Naive thymus-derived CD4-positive, alpha-beta T cell (primary cell): ENCODE measurements at regions of chr16 and their contacts with region 1.

Region 1: DNA sequence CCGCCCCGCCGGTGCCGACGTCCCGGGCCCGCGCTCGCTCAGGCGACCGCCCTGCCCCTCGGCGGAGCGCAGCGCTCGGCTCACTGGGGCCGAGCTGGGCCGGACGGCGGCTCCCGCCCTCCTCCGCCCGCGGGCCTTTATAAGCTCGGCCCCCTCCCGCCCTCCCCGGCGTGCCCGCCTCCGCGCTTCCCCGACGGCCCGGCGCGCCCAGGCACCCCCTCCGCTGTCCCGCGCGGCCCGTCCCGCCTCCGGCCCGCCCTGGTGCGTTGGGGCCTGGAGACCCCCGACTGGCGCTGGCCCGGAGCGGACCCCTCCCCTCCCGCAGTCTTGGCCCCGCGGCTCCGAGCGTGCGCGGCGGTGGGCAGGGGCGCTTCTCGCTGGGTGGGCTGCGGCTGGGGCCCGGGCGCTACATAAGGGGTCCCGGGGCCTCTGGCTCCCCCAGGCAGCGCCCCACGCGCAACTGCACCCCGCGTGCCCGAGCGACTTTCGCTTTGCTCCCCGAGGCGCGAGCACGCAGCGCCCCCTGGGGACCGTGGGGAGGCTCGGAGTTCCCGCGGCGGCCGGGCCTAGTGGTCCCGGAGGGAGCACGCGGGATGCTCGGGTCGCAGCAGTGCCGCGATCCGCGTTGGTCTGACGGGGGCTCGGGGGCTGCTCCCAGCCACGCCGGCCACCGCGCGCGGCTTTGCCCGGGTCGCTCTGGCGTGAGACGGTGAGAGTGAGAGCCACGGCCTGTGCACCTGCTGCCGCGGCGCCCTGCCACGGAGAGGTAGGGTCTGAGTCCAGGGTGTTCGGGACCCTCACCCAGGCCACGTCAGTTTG is at the start of gene PIEZO1:
- DNase-seq: peak; percentile 76 to 93 (median 85)
- ATAC-seq: peak; percentile 77
- H3K4me3 ChIP-seq: peak within 1 kb of the TSS; percentile 54
- H3K4me3 Mint-ChIP-seq: peak within 1 kb of the TSS; percentile 66 to 87 (median 76)
- H3K27ac ChIP-seq: peak within 1 kb of the TSS; percentile 72
- H3K27ac Mint-ChIP-seq: peak within 1 kb of the TSS in 6 of 9 donors; percentile 45 to 92 (median 61)
- H3K4me1 ChIP-seq: peaks cover 48 to 49% of the 10 kb centered on the region in 2 donors
- H3K4me1 Mint-ChIP-seq: peaks cover 35 to 45% (median 45%) of the 10 kb centered on the region in 7 donors
- H3K27me3 ChIP-seq: no peaks in the 10 kb centered on the region
- H3K27me3 Mint-ChIP-seq: no peaks in the 10 kb centered on the region
- total RNA-seq, gene PIEZO1: 84.5 to 237 (median 124) TPM

Region 2: GRCh38 chr16:88442727-88443576 is 342.4 kb before region 1 on chr16:
- CTCF ChIA-PET with region 1: no interaction called
- POLR2A ChIA-PET with region 1: no interaction called
- intact Hi-C with region 1: loop called in 1 of 2 experiments (anchors 1 kb)
- DNase-seq: peak; percentile 61 to 91 (median 80)
- ATAC-seq: peak; percentile 88
- H3K4me3 ChIP-seq: no peak overlapping the region
- H3K4me3 Mint-ChIP-seq: peak overlapping the region in 2 of 10 donors; percentile 43 to 68
- H3K27ac ChIP-seq: no peak overlapping the region
- H3K27ac Mint-ChIP-seq: peak overlapping the region in 1 of 9 donors; percentile 43
- H3K4me1 ChIP-seq: peaks cover 4% of the 10 kb centered on the region in 2 donors
- H3K4me1 Mint-ChIP-seq: peaks cover 0 to 3% (median 0%) of the 10 kb centered on the region in 7 donors
- H3K27me3 ChIP-seq: no peaks in the 10 kb centered on the region
- H3K27me3 Mint-ChIP-seq: peaks cover 0 to 6% (median 0%) of the 10 kb centered on the region in 5 donors

Region 3: DNA sequence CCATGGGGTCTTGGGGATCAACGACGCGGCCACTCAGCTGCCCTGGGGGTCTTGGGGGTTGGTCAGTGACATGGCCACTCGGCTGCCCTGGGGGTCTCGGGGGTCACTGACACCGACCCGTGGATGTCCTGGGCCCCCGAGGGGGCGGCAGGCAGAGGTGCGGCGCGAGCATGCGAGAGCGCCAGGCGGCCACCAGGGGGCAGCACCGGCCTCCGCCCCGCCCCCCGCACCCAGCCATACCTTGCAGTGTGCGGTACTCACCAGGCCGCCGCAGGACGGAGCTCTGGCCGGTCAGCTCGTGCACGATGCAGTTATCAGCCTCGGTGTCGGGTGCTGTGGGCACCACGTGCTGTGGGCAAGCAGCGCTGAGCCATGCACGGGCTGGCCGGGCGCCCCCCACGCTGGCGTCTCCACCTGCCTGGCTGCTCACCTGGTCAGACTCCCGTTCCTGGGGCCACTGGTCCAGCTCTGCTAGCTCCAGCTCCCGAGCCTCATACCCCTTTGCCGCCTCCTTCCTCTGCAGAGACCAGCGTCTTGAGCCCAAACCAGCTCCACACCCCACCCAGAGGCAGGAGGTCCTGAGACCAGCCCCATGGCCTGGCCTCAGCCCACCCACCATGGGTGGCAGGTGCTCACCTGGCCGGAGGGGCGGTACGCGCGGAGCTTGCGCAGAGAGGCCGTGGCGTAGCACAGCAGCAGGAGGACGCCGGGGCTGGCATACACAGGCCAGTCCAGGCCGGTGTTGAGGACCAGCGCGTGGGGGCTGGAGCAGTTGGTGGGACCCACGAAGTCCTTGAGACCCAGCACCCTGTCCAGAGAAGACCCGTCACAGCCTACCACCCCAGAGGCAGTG is 47.8 kb before region 1 on chr16:
- CTCF ChIA-PET with region 1: interaction called, 17 read pairs
- POLR2A ChIA-PET with region 1: interaction called, 25 read pairs
- intact Hi-C with region 1: loop called (anchors 1 kb)
- DNase-seq: peak; percentile 55 to 81 (median 65)
- ATAC-seq: peak; percentile 95
- H3K4me3 ChIP-seq: no peak overlapping the region
- H3K4me3 Mint-ChIP-seq: peak overlapping the region in 1 of 10 donors; percentile 34
- H3K27ac ChIP-seq: no peak overlapping the region
- H3K27ac Mint-ChIP-seq: no peak overlapping the region
- H3K4me1 ChIP-seq: peaks cover 3 to 5% of the 10 kb centered on the region in 2 donors
- H3K4me1 Mint-ChIP-seq: peaks cover 0 to 8% (median 0%) of the 10 kb centered on the region in 7 donors
- H3K27me3 ChIP-seq: no peaks in the 10 kb centered on the region
- H3K27me3 Mint-ChIP-seq: no peaks in the 10 kb centered on the region

Region 4: GRCh38 chr16:88770461-88771293 is 14.6 kb before region 1 on chr16:
- CTCF ChIA-PET with region 1: interaction called, 4 read pairs
- POLR2A ChIA-PET with region 1: interaction called, 13 read pairs
- intact Hi-C with region 1: no loop called
- DNase-seq: peak in 1 of 9 donors; percentile 43
- ATAC-seq: peak; percentile 73
- H3K4me3 ChIP-seq: no peak overlapping the region
- H3K4me3 Mint-ChIP-seq: peak overlapping the region in 6 of 10 donors; percentile 25 to 67 (median 42)
- H3K27ac ChIP-seq: no peak overlapping the region
- H3K27ac Mint-ChIP-seq: peak overlapping the region in 4 of 9 donors; percentile 17 to 57 (median 40)
- H3K4me1 ChIP-seq: peaks cover 15 to 29% of the 10 kb centered on the region in 2 donors
- H3K4me1 Mint-ChIP-seq: peaks cover 10 to 38% (median 22%) of the 10 kb centered on the region in 7 donors
- H3K27me3 ChIP-seq: no peaks in the 10 kb centered on the region
- H3K27me3 Mint-ChIP-seq: no peaks in the 10 kb centered on the region

Region 5: GRCh38 chr16:88811769-88812512 is 26.6 kb after region 1 on chr16 and contains the start of gene APRT:
- CTCF ChIA-PET with region 1: interaction called, 11 read pairs
- POLR2A ChIA-PET with region 1: interaction called, 71 read pairs
- intact Hi-C with region 1: loop called in 1 of 2 experiments (anchors 2 kb)
- DNase-seq: peak; percentile 92 to 100 (median 98)
- ATAC-seq: peak; percentile 95
- H3K4me3 ChIP-seq: peak within 1 kb of the TSS; percentile 97
- H3K4me3 Mint-ChIP-seq: peak within 1 kb of the TSS; percentile 92 to 99 (median 96)
- H3K27ac ChIP-seq: peak within 1 kb of the TSS; percentile 84
- H3K27ac Mint-ChIP-seq: peak within 1 kb of the TSS; percentile 79 to 98 (median 95)
- H3K4me1 ChIP-seq: peaks cover 8 to 11% of the 10 kb centered on the region in 2 donors
- H3K4me1 Mint-ChIP-seq: peaks cover 0 to 26% (median 12%) of the 10 kb centered on the region in 7 donors
- H3K27me3 ChIP-seq: no peaks in the 10 kb centered on the region
- H3K27me3 Mint-ChIP-seq: no peaks in the 10 kb centered on the region
- total RNA-seq, gene APRT: 134 to 178 (median 161) TPM